HEK293 (cell line): ENCODE measurements at regions of chr19 and their contacts with region 1.

Region 1: DNA sequence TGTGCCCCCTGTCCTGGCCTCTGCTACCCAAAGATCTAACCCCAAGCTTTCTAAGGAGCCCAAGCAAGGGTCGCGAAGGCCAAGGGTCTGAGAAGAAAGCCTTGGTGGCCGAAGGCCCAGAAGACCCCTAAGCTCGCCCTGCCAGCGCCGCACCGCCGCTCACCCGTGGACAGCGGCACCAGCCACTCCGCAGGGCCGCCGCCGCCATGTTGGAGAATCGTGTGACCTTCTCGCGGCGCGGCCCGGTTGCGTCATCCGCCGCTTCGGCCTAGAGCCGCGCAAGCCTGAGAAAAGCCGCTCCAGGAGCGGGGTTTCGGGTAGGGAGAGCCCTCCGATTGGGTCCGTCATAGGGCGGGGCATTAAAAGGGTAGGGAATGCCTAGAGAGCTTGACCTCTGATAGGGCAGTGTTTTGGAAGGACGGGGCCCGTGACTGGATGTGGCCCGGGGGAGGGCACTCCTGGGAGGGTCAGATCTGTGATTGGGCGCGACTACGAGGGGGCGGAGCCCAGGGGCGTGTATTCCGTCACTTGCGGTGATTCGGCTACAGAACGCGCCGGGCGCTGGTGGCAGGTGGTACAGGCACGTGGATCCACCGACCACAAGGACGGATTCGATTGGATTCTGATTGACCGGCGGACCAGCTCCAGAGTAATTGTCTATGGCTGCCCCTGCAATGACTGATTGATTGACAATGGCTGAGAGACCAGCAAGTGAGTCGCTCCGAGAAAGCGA is at the start of gene TIMM44:
- H3K4me3 ChIP-seq: peak within 1 kb of the TSS; percentile 99
- H3K27ac ChIP-seq: peak within 1 kb of the TSS; percentile 90
- H3K4me1 ChIP-seq: no peaks in the 10 kb centered on the region
- CTCF ChIP-seq: no peak

Region 2: GRCh38 chr19:7868676-7869452 is 74.7 kb before region 1 on chr19:
- CTCF ChIA-PET with region 1: interaction called, 12 read pairs
- POLR2A ChIA-PET with region 1: interaction called, 17 read pairs
- H3K4me3 ChIP-seq: peak overlapping the region; percentile 52
- H3K27ac ChIP-seq: peak overlapping the region; percentile 45; the same call in 1 of the 2 replicates
- H3K4me1 ChIP-seq: peaks cover 6% of the 10 kb centered on the region
- CTCF ChIP-seq: peak; percentile 72; the same call in 1 of the 2 replicates

Region 3: GRCh38 chr19:7919610-7920518 is 23.7 kb before region 1 on chr19 and contains the start of gene SNAPC2:
- CTCF ChIA-PET with region 1: interaction called, 5 read pairs
- POLR2A ChIA-PET with region 1: interaction called, 36 read pairs
- H3K4me3 ChIP-seq: peak within 1 kb of the TSS; percentile 80
- H3K27ac ChIP-seq: peak within 1 kb of the TSS; percentile 49; the same call in 1 of the 2 replicates
- H3K4me1 ChIP-seq: peaks cover 3% of the 10 kb centered on the region; the same call in 1 of the 2 replicates
- CTCF ChIP-seq: no peak

Region 4: GRCh38 chr19:7961921-7962626 is 18.5 kb after region 1 on chr19:
- CTCF ChIA-PET with region 1: interaction called, 10 read pairs
- POLR2A ChIA-PET with region 1: interaction called, 7 read pairs
- H3K4me3 ChIP-seq: no peak overlapping the region
- H3K27ac ChIP-seq: no peak overlapping the region; the same call in 1 of the 2 replicates
- H3K4me1 ChIP-seq: no peaks in the 10 kb centered on the region
- CTCF ChIP-seq: no peak

Region 5: GRCh38 chr19:8005534-8006256 is 62.1 kb after region 1 on chr19 and contains the start of gene ELAVL1:
- CTCF ChIA-PET with region 1: interaction called, 12 read pairs
- POLR2A ChIA-PET with region 1: interaction called, 15 read pairs
- H3K4me3 ChIP-seq: peak within 1 kb of the TSS; percentile 100
- H3K27ac ChIP-seq: peak within 1 kb of the TSS; percentile 85
- H3K4me1 ChIP-seq: peaks cover 9% of the 10 kb centered on the region
- CTCF ChIP-seq: 0 out of 2 replicates have a peak, but pooled peaks have one; percentile 44

Region 6: DNA sequence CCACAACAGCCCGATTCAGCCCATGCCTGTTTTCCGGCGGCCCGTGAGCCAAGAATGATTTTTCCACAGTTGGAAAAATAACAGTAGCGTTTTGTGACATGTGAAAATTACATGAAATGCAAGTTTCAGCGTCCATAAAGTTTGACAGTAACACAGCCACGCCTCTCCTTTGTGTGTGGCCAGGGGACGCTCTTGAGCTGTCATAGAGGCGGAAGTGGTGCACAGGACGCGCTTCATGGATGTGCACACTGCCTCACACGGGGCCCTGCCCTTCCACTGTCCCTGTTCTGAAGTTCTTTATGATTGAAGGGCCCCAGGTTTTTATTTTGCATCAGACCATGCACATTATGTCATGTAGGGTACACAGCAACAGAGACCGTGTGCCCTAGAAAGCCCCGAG is 74.2 kb after region 1 on chr19:
- CTCF ChIA-PET with region 1: no interaction called
- POLR2A ChIA-PET with region 1: no interaction called
- H3K4me3 ChIP-seq: no peak overlapping the region
- H3K27ac ChIP-seq: no peak overlapping the region
- H3K4me1 ChIP-seq: no peaks in the 10 kb centered on the region
- CTCF ChIP-seq: no peak

Region 7: GRCh38 chr19:8321060-8321985 is 377.7 kb after region 1 on chr19 and contains the starts of genes NDUFA7 and RPS28:
- CTCF ChIA-PET with region 1: no interaction called
- POLR2A ChIA-PET with region 1: interaction called, 12 read pairs
- H3K4me3 ChIP-seq: peak within 1 kb of the TSS; percentile 97
- H3K27ac ChIP-seq: peak within 1 kb of the TSS; percentile 83
- H3K4me1 ChIP-seq: peaks cover 5% of the 10 kb centered on the region; the same call in 1 of the 2 replicates
- CTCF ChIP-seq: peak; percentile 81